Activated naive CD4-positive, alpha-beta T cell treated with anti-CD3 and anti-CD28 coated beads for 36 hours (primary cell): ENCODE measurements at regions of chr15 and their contacts with region 1.

Region 1: DNA sequence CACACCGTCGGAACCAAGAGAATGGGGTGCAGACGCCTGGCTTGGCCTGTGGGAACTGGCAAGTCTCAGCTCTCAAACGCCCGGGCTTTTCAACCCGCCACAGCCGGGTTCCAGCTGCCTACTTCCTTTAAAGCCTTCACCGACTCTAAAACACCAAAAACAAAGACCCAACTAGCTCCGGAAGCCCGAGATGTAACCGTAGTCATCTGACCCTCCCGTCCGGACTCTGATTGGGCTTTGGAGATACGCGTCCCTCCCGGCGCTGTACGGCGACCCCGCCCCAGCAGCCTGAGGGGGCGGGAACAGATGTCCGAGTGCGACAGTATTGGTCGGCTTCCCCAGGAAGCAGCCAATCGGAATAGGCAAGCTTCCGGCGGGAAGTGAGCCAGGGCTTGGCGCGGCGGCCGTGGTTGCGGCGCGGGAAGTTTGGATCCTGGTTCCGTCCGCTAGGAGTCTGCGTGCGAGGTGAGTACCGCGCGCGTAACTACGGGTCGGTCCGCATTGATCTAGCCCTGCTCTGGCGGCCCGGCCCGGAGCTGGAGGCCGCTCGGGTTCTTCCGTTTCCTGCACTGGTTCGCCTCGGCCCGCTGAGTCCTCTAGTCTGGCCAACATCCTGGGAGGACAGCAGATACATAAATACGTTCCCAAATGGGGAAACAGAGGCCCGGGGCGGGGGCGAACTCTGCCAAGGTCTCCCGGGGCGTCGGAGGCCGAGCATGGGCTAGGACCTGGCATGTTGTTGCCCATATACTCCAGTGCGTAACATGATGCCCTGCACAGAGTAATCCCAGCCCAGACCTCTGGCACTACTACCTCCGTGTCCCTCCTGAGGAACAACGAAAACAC is at the start of gene BLM:
- DNase-seq: peak; percentile 97
- H3K4me3 Mint-ChIP-seq: peak within 1 kb of the TSS; percentile 87
- H3K27ac Mint-ChIP-seq: peak within 1 kb of the TSS; percentile 90
- H3K4me1 Mint-ChIP-seq: peaks cover 24% of the 10 kb centered on the region
- H3K27me3 Mint-ChIP-seq: no peaks in the 10 kb centered on the region
- total RNA-seq, gene BLM: 62.9 to 70.4 TPM

Region 2: GRCh38 chr15:90387537-90388461 is 329.4 kb before region 1 on chr15 and contains the start of gene IQGAP1:
- CTCF ChIA-PET with region 1: no interaction called
- intact Hi-C with region 1: loop called (anchors 1 kb)
- DNase-seq: peak; percentile 99
- H3K4me3 Mint-ChIP-seq: peak within 1 kb of the TSS; percentile 89
- H3K27ac Mint-ChIP-seq: peak within 1 kb of the TSS; percentile 90
- H3K4me1 Mint-ChIP-seq: peaks cover 39% of the 10 kb centered on the region
- H3K27me3 Mint-ChIP-seq: no peaks in the 10 kb centered on the region
- total RNA-seq, gene IQGAP1: 136 to 143 TPM

Region 3: GRCh38 chr15:90648137-90649070 is 68.8 kb before region 1 on chr15:
- CTCF ChIA-PET with region 1: interaction called, 9 read pairs
- intact Hi-C with region 1: loop called (anchors 1 kb)
- DNase-seq: peak; percentile 82
- H3K4me3 Mint-ChIP-seq: peak overlapping the region; percentile 58
- H3K27ac Mint-ChIP-seq: peak overlapping the region; percentile 91
- H3K4me1 Mint-ChIP-seq: peaks cover 30% of the 10 kb centered on the region
- H3K27me3 Mint-ChIP-seq: peaks cover 4% of the 10 kb centered on the region

Region 4: GRCh38 chr15:90686435-90687218 is 30.6 kb before region 1 on chr15:
- CTCF ChIA-PET with region 1: no interaction called
- intact Hi-C with region 1: loop called (anchors 1 kb)
- DNase-seq: peak; percentile 65
- H3K4me3 Mint-ChIP-seq: no peak overlapping the region
- H3K27ac Mint-ChIP-seq: peak overlapping the region; percentile 92
- H3K4me1 Mint-ChIP-seq: peaks cover 24% of the 10 kb centered on the region
- H3K27me3 Mint-ChIP-seq: no peaks in the 10 kb centered on the region

Region 5: DNA sequence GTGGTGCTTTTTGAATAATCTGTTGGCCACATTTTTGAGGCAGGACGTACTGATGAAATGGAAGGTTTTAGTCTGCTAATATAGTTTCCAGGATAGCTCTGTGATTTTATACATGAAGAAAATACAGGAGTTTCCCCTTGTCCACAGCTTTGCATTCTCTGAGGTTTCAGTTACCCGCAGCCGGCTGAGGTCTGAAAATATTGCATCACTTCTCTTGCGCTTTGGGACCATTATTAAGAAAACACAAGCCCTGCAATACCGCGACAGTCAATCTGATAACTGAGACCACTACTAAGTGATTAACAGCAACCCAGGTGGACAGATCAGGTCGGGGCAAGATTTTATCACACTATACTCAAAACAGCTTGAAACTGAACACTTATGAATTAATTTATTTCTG is 33.0 kb after region 1 on chr15:
- CTCF ChIA-PET with region 1: no interaction called
- intact Hi-C with region 1: loop called (anchors 5 kb)
- DNase-seq: peak; percentile 38
- H3K4me3 Mint-ChIP-seq: peak overlapping the region; percentile 21
- H3K27ac Mint-ChIP-seq: peak overlapping the region; percentile 84
- H3K4me1 Mint-ChIP-seq: peaks cover 29% of the 10 kb centered on the region
- H3K27me3 Mint-ChIP-seq: no peaks in the 10 kb centered on the region

Region 6: DNA sequence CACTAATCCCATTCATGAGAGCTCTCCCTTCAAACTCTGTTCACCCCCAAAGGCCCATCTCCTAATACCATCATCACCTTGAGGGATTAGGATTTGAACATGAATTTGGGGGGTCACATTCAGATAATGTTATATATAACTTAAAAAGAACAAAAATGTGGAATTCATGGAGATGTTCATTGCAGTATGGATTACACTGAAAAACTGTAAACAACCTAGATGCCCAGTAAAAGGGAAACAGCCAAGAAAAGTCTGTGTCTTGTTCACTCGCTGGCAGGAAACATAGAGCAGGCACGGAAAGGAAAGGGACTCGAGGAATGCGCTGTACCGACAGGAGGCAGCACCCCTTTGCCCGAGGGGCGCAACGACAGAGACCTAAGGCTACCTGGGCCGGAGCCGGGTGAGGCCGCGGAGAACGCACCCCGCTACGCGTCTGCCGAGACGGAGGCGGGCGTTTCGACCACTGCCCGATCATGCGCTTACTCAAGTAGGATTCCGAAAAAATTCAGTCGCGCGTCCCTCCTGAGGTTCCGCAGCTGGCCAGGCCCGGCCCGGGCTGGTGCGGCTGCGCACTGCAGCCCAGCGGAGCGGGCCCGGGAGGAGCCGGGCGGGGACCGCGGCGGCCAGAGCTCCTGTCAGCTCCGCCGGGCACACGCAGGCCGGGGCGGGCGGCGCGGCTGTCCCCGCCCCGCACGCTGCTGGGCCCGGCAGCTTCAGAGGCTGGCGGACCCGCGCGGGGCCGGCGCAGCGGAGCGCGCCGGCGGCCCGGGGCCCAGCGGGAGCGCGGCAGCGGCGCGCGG is 185.0 kb after region 1 on chr15:
- CTCF ChIA-PET with region 1: interaction called, 3 read pairs
- intact Hi-C with region 1: loop called (anchors 1 kb)
- DNase-seq: peak; percentile 84
- H3K4me3 Mint-ChIP-seq: peak overlapping the region; percentile 86
- H3K27ac Mint-ChIP-seq: peak overlapping the region; percentile 88
- H3K4me1 Mint-ChIP-seq: peaks cover 27% of the 10 kb centered on the region
- H3K27me3 Mint-ChIP-seq: no peaks in the 10 kb centered on the region